SK-N-SH (cell line): ENCODE measurements at regions of chr11 and their contacts with region 1.

Region 1: GRCh38 chr11:113994077-113994954 is 19.4 kb downstream of the HTR3A start:
- DNase-seq: peak; percentile 71
- H3K4me3 ChIP-seq: no peak overlapping the region
- H3K27ac ChIP-seq: no peak overlapping the region
- H3K4me1 ChIP-seq: peaks cover 0 to 16% of the 10 kb centered on the region in 2 experiments; a peak in 1 of 4 replicates
- H3K27me3 ChIP-seq: no peaks in the 10 kb centered on the region
- CTCF ChIP-seq: peak; percentile 79
- EP300 ChIP-seq: no peak
- RAD21 ChIP-seq: peak; percentile 74

Region 2: DNA sequence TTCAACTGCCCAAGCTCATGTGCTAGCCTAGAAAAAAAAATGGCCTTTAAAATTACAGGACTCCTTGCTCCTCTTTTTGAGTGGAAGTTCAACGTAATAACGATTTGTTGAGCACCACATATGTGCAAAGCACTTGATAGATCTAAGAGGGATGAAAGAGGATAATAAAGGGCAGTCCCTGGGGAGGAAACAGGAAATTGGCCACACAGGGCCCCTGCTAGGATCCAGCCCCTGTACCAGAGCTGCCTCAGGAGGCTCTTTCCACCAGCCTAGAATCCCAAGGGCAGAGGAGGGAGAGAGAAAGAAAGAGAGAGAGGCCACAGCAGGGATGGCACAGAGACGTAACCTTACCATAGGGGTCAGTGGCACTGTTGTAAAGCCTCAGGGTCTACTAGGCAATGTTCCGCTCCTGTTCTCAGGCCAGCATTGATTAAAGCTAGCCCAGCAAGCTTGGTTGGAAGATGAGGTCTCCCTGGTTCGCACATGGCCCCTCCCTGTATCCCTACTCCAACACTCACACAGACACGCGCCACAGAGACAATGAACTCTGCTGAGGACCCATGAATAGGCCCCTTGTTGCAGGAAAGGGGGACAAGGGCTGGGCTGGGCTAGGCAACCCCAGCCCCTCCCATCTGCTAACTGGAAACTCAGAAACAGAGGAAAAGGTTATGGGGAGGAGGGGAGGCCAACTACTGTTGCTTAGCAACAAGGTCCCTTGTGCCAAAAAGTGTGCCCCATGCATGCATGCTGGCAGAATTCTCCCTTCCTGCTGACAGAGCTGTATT is 288.3 kb before region 1 on chr11 and contains the start of gene TMPRSS5:
- CTCF ChIA-PET with region 1: no interaction called
- POLR2A ChIA-PET with region 1: no interaction called
- DNase-seq: no peak
- H3K4me3 ChIP-seq: no peak within 1 kb of the TSS
- H3K27ac ChIP-seq: no peak within 1 kb of the TSS
- H3K4me1 ChIP-seq: no peaks in the 10 kb centered on the region; a peak in 2 of 4 replicates
- H3K27me3 ChIP-seq: no peaks in the 10 kb centered on the region
- CTCF ChIP-seq: no peak
- EP300 ChIP-seq: no peak
- RAD21 ChIP-seq: no peak
- polyA plus RNA-seq, gene TMPRSS5: 0.28 and 0.29 TPM in 2 replicates

Region 3: DNA sequence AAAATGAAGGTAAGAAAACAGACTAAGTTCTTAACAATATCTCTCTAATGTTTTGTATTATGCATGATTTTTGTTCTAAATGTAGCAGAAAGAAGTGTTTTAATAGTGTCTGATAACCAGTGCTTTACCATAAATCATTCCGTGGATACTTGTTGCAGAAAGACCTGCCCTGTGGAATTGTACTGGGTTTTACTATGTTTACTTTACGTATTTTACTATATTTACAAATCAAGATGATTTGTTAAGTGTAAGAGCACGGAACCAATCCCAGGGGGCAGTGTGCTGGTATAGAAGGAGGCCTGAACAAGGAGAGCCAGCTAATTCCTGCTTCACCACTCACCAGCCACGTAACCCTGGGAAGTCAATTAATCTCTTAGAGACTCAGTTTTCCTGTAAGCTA is 88.3 kb before region 1 on chr11:
- CTCF ChIA-PET with region 1: interaction called, 17 read pairs
- POLR2A ChIA-PET with region 1: no interaction called
- DNase-seq: no peak
- H3K4me3 ChIP-seq: no peak overlapping the region
- H3K27ac ChIP-seq: no peak overlapping the region
- H3K4me1 ChIP-seq: no peaks in the 10 kb centered on the region; a peak in 2 of 4 replicates
- H3K27me3 ChIP-seq: no peaks in the 10 kb centered on the region; the same call in 1 of the 2 replicates
- CTCF ChIP-seq: peak; percentile 27
- EP300 ChIP-seq: no peak
- RAD21 ChIP-seq: no peak

Region 4: GRCh38 chr11:113974741-113975470 is 19.4 kb before region 1 on chr11 and contains the start of gene HTR3A:
- CTCF ChIA-PET with region 1: interaction called, 59 read pairs
- POLR2A ChIA-PET with region 1: no interaction called
- DNase-seq: peak; percentile 43
- H3K4me3 ChIP-seq: no peak within 1 kb of the TSS
- H3K27ac ChIP-seq: no peak within 1 kb of the TSS
- H3K4me1 ChIP-seq: peaks cover 0 to 16% of the 10 kb centered on the region in 2 experiments; a peak in 1 of 4 replicates
- H3K27me3 ChIP-seq: no peaks in the 10 kb centered on the region; the same call in 1 of the 2 replicates
- CTCF ChIP-seq: no peak
- EP300 ChIP-seq: no peak
- RAD21 ChIP-seq: no peak
- polyA plus RNA-seq, gene HTR3A: not detected in 2 replicates

Region 5: GRCh38 chr11:114008331-114008730 is 14.0 kb after region 1 on chr11:
- CTCF ChIA-PET with region 1: interaction called, 11 read pairs
- POLR2A ChIA-PET with region 1: no interaction called
- DNase-seq: no peak
- H3K4me3 ChIP-seq: no peak overlapping the region
- H3K27ac ChIP-seq: no peak overlapping the region
- H3K4me1 ChIP-seq: no peaks in the 10 kb centered on the region
- H3K27me3 ChIP-seq: no peaks in the 10 kb centered on the region
- CTCF ChIP-seq: no peak
- EP300 ChIP-seq: no peak
- RAD21 ChIP-seq: no peak

Region 6: GRCh38 chr11:114036156-114036811 is 42.0 kb after region 1 on chr11:
- CTCF ChIA-PET with region 1: interaction called, 61 read pairs
- POLR2A ChIA-PET with region 1: no interaction called
- DNase-seq: peak; percentile 90
- H3K4me3 ChIP-seq: peak overlapping the region; percentile 19 to 66; a peak in 3 of 4 replicates
- H3K27ac ChIP-seq: no peak overlapping the region
- H3K4me1 ChIP-seq: peaks cover 3% of the 10 kb centered on the region in 2 experiments; a peak in 2 of 4 replicates
- H3K27me3 ChIP-seq: peaks cover 25% of the 10 kb centered on the region; the same call in 1 of the 2 replicates
- CTCF ChIP-seq: peak; percentile 82
- EP300 ChIP-seq: no peak
- RAD21 ChIP-seq: peak; percentile 85

Region 7: GRCh38 chr11:114121804-114122504 is 127.6 kb after region 1 on chr11:
- CTCF ChIA-PET with region 1: no interaction called
- POLR2A ChIA-PET with region 1: no interaction called
- DNase-seq: no peak
- H3K4me3 ChIP-seq: no peak overlapping the region
- H3K27ac ChIP-seq: no peak overlapping the region
- H3K4me1 ChIP-seq: no peaks in the 10 kb centered on the region
- H3K27me3 ChIP-seq: peaks cover under 1% of the 10 kb centered on the region; the same call in 1 of the 2 replicates
- CTCF ChIP-seq: no peak
- EP300 ChIP-seq: no peak
- RAD21 ChIP-seq: no peak

Region 8: GRCh38 chr11:114180301-114181055 is 186.2 kb after region 1 on chr11:
- CTCF ChIA-PET with region 1: interaction called, 11 read pairs
- POLR2A ChIA-PET with region 1: no interaction called
- DNase-seq: peak; percentile 61
- H3K4me3 ChIP-seq: no peak overlapping the region
- H3K27ac ChIP-seq: no peak overlapping the region
- H3K4me1 ChIP-seq: no peaks in the 10 kb centered on the region
- H3K27me3 ChIP-seq: peaks cover 6% of the 10 kb centered on the region; the same call in 1 of the 2 replicates
- CTCF ChIP-seq: peak; percentile 43
- EP300 ChIP-seq: no peak
- RAD21 ChIP-seq: peak; percentile 73

Region 9: DNA sequence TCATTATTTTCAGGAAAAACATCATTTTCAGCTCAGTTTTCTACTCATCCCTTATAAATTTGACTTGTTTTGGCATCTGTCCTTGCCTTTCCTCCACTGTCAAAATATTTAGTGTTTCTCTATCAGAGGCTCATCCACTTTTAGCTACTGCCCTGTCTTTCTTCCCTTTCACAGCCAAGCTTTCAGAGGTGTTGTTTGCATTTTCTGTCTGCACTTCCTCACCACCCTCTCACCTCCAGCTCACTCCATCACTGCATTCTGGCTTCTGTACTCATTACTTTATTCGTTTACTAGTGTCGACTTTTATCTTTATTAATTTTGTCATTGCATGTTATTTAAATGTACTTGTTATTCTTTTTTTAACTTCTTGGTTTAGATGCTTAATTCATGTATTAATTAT is 275.2 kb after region 1 on chr11:
- CTCF ChIA-PET with region 1: interaction called, 329 read pairs
- POLR2A ChIA-PET with region 1: no interaction called
- DNase-seq: no peak
- H3K4me3 ChIP-seq: no peak overlapping the region
- H3K27ac ChIP-seq: no peak overlapping the region
- H3K4me1 ChIP-seq: no peaks in the 10 kb centered on the region
- H3K27me3 ChIP-seq: peaks cover 50% of the 10 kb centered on the region
- CTCF ChIP-seq: no peak
- EP300 ChIP-seq: no peak
- RAD21 ChIP-seq: no peak